Esophagus muscularis mucosa (tissue), 4 donors: ENCODE measurements at regions of chr5 and their contacts with region 1.

Region 1: DNA sequence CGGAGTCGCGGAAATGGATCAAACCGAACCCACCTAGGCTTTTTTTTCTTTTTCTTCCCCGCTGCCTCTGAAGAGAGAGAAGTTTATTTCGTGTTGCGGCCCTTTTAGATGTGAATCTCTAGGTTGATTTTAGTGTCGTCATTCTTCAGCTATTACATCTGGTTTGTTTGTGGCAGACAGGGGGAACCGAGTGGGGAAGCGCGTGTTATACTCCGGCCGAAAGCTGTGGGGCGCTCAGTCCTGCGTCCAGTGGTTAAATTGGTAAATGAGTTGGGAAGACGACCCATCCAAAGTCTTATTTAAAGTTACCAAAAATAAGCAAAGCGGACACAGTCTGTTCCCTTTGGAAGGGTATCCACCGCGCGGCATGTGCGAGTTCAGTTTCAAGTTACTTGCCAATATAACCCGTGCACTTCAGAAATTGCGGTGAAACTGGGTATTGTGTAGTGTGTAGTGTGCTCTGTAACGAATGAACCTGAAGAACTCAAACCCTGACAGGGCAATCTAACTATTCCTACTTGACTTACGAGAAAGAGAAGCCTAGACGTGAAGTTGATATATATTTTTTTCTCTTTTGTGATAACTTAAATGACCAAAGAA is 1.3 kb downstream of the MAN2A1 start:
- DNase-seq: peak; percentile 94
- H3K4me3 ChIP-seq: peak overlapping the region; percentile 85 to 95 (median 90)
- H3K27ac ChIP-seq: peak overlapping the region; percentile 94 to 98 (median 97)
- H3K4me1 ChIP-seq: peaks cover 37 to 50% (median 47%) of the 10 kb centered on the region in 4 donors
- H3K27me3 ChIP-seq: no peaks in the 10 kb centered on the region
- CTCF ChIP-seq: peak; percentile 84 to 90 (median 85)
- EP300 ChIP-seq: no peak
- POLR2A ChIP-seq: no peak

Region 2: DNA sequence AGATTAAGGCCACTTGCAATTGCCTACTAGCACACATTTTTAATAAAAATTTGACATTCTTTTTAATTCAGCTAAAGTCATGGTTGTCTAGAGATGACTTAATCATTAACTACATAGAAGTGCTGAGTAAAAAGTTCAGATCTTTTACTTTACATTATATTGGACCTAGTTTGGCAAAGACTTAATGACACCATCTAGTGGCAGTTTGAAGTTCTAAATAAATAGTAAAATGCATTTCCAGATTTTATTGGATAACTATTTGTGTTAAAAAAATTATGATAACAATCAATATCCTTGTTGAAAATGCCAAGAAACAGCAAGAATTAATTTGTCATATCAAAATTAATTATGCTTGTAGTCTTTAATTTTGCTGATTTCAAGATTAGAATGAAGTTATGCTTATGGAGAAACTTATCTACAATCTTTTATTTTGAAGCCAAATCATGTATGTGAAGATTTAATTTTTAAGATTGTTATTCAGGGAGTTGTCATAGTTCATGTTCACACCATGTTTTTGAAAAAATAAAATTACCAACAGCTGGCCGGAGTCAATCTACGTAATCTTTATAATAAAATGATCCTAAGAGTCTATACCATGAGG is 211.7 kb before region 1 on chr5:
- intact Hi-C with region 1: loop called (anchors 10 kb)
- DNase-seq: no peak
- H3K4me3 ChIP-seq: no peak overlapping the region
- H3K27ac ChIP-seq: no peak overlapping the region
- H3K4me1 ChIP-seq: peaks cover 0 to 6% (median 0%) of the 10 kb centered on the region in 4 donors
- H3K27me3 ChIP-seq: no peaks in the 10 kb centered on the region
- CTCF ChIP-seq: peak; percentile 18 to 35 (median 34)
- EP300 ChIP-seq: no peak
- POLR2A ChIP-seq: no peak

Region 3: DNA sequence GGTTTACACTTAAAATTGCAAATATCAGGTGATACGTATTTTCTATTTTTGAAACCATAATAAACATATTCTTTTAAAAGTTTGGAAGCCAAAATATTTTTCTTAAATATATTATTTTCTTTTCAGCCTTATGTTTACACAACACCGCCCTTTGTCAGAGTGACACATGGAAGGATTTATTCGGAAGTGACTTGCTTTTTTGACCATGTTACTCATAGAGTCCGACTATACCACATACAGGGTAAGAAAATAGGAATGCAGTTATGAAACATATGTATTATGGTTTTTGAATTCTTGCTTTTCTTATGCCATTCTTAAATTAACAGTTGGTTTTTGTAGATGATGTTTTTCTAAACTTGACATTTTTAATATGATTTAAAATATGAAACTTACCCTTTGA is 132.5 kb after region 1 on chr5:
- intact Hi-C with region 1: no loop called
- DNase-seq: no peak
- H3K4me3 ChIP-seq: no peak overlapping the region
- H3K27ac ChIP-seq: no peak overlapping the region
- H3K4me1 ChIP-seq: no peaks in the 10 kb centered on the region
- H3K27me3 ChIP-seq: no peaks in the 10 kb centered on the region
- CTCF ChIP-seq: no peak
- EP300 ChIP-seq: no peak
- POLR2A ChIP-seq: no peak

Region 4: GRCh38 chr5:110625376-110625999 is 934.4 kb after region 1 on chr5:
- intact Hi-C with region 1: loop called (anchors 10 kb)
- DNase-seq: no peak
- H3K4me3 ChIP-seq: no peak overlapping the region
- H3K27ac ChIP-seq: no peak overlapping the region
- H3K4me1 ChIP-seq: no peaks in the 10 kb centered on the region
- H3K27me3 ChIP-seq: no peaks in the 10 kb centered on the region
- CTCF ChIP-seq: peak; percentile 23 to 58 (median 52)
- EP300 ChIP-seq: no peak
- POLR2A ChIP-seq: no peak